ENCODE measurements at regions of chr1 and their contacts with region 1.

Region 1: DNA sequence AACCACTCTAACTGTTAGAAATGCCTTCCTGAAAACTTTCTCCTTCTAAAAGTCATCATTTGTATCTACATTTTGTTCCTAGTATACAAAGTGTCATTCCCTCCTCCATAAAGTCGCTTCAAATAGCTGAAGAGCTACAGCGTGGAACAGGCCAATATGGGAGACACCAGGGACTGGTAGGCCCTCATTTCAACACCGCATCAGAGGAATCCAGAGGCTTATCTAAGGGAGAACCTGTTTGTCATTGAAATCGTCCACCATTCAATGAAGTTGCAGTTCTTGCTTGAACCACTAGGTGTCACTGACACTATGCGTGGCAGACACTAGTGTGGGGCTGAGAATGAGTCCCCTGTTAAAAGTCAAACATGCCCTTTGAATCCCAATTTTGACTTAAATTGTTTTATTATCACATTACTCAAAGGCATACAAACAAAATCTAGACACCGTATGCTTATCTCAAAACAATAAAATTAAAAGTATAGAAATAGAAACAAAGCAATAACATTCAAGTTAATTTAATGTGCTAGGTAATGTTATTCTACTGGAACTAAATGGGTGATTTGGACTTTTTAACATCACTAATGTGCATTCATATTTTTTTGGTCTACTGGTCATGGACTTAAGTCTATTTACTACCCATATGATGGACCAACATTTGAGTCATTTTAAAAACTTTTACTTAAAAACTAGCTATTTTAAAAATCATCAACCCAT is 182.3 kb downstream of the FCRL5 start:
- DNase-seq: no peak
- H3K4me3 ChIP-seq: no peak overlapping the region
- H3K27ac ChIP-seq: no peak overlapping the region
- H3K4me1 ChIP-seq: no peaks in the 10 kb centered on the region
- H3K27me3 ChIP-seq: no peaks in the 10 kb centered on the region
- CTCF ChIP-seq: peak; percentile 37 to 84 (median 76)

Region 2: GRCh38 chr1:157403203-157403602 is 33.2 kb after region 1 on chr1:
- intact Hi-C with region 1: no loop called
- DNase-seq: no peak
- H3K4me3 ChIP-seq: no peak overlapping the region
- H3K27ac ChIP-seq: no peak overlapping the region
- H3K4me1 ChIP-seq: no peaks in the 10 kb centered on the region
- H3K27me3 ChIP-seq: no peaks in the 10 kb centered on the region
- CTCF ChIP-seq: no peak

Region 3: GRCh38 chr1:157496121-157496526 is 126.2 kb after region 1 on chr1:
- intact Hi-C with region 1: loop called (anchors 5 kb)
- DNase-seq: no peak
- H3K4me3 ChIP-seq: no peak overlapping the region
- H3K27ac ChIP-seq: no peak overlapping the region
- H3K4me1 ChIP-seq: no peaks in the 10 kb centered on the region
- H3K27me3 ChIP-seq: no peaks in the 10 kb centered on the region
- CTCF ChIP-seq: peak; percentile 9 to 87 (median 86)